PC-9 (cell line): ENCODE measurements at regions of chr12 and their contacts with region 1.

Region 1: DNA sequence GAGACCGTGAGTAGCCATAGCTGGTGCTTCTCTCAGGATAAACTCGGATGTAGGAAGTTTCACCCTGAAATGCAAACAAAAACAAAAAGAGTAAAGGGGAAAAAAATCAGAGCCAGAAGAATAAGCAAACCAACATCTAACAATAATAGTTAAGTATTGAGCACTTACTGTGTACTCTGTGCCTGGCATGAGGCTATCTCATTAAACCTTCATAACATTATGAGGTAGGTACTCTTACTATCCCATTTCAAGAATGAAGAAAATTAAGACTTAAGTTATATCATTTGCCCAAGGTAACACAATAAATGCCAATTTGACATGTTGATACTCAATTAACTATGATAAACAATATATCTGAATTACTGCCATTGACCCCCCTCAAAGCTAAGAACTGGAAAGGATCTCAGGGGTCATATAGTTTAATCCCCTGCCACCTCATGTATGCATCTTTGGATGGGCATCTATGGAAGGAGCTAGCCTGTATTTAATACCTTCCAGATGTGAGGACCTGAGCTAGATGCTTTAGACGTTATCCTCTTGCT is 7.4 kb downstream of the SRSF9 start:
- DNase-seq: no peak
- H3K4me3 ChIP-seq: no peak overlapping the region
- H3K27ac ChIP-seq: no peak overlapping the region
- H3K4me1 ChIP-seq: 0 out of 2 replicates have a peak, but pooled peaks cover 5% of the 10 kb centered on the region
- H3K27me3 ChIP-seq: no peaks in the 10 kb centered on the region
- CTCF ChIP-seq: no peak

Region 2: GRCh38 chr12:120350576-120351350 is 111.4 kb before region 1 on chr12:
- CTCF ChIA-PET with region 1: no interaction called
- POLR2A ChIA-PET with region 1: no interaction called
- intact Hi-C with region 1: no loop called
- DNase-seq: no peak
- H3K4me3 ChIP-seq: no peak overlapping the region
- H3K27ac ChIP-seq: no peak overlapping the region
- H3K4me1 ChIP-seq: no peaks in the 10 kb centered on the region
- H3K27me3 ChIP-seq: no peaks in the 10 kb centered on the region
- CTCF ChIP-seq: no peak

Region 3: DNA sequence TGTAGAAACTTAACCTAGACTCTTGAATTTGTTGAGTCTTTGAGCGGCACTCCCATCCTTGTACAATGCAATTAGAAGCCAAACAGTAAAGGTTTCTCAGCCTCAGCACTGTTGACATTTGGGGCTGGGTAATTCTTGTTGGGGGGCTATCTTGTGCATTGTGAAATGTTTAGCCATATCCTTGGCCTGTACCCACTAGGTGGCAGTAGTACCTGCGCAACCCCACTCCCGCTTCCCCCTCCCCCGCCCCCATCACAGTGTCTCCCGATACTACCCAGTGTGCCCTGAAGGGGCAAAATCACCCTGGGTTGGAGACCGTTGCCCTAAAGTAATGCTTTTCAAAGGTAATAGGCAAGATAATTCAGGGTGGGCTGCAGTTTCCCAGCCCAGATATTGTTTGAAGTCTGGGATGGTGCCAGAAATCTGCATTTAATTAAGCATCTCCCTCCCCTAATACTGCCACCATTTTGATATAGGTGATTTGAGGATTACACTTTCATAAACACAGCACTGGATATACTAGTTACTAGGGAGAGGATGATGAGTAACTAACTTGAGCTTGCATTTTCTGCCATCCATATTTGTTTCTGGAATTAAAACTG is 22.4 kb before region 1 on chr12:
- CTCF ChIA-PET with region 1: no interaction called
- POLR2A ChIA-PET with region 1: no interaction called
- intact Hi-C with region 1: no loop called
- DNase-seq: peak; percentile 36 to 47
- H3K4me3 ChIP-seq: no peak overlapping the region
- H3K27ac ChIP-seq: no peak overlapping the region
- H3K4me1 ChIP-seq: peaks cover 15% of the 10 kb centered on the region
- H3K27me3 ChIP-seq: no peaks in the 10 kb centered on the region
- CTCF ChIP-seq: peak; percentile 72

Region 4: GRCh38 chr12:120534203-120534702 is 72.1 kb after region 1 on chr12 and contains the start of gene RNF10:
- CTCF ChIA-PET with region 1: no interaction called
- POLR2A ChIA-PET with region 1: interaction called, 12 read pairs
- intact Hi-C with region 1: no loop called
- DNase-seq: peak; percentile 64 to 67
- H3K4me3 ChIP-seq: peak within 1 kb of the TSS; percentile 97
- H3K27ac ChIP-seq: peak within 1 kb of the TSS; percentile 60
- H3K4me1 ChIP-seq: peaks cover 55% of the 10 kb centered on the region
- H3K27me3 ChIP-seq: no peaks in the 10 kb centered on the region
- CTCF ChIP-seq: no peak
- total RNA-seq, gene RNF10: 196 and 241 TPM in 2 replicates